CD8-positive, alpha-beta T cell (primary cell): ENCODE measurements at regions of chr13 and their contacts with region 1.

Region 1: GRCh38 chr13:77480066-77480465 is 55.4 kb upstream of the SCEL start:
- DNase-seq: no peak
- ATAC-seq: no peak
- H3K4me3 ChIP-seq: no peak overlapping the region
- H3K4me3 Mint-ChIP-seq: no peak overlapping the region
- H3K27ac ChIP-seq: no peak overlapping the region
- H3K27ac Mint-ChIP-seq: no peak overlapping the region
- H3K4me1 ChIP-seq: no peaks in the 10 kb centered on the region
- H3K4me1 Mint-ChIP-seq: peaks cover 10% of the 10 kb centered on the region
- H3K27me3 ChIP-seq: no peaks in the 10 kb centered on the region
- H3K27me3 Mint-ChIP-seq: no peaks in the 10 kb centered on the region
- CTCF ChIP-seq: no peak

Region 2: GRCh38 chr13:77176350-77176749 is 303.7 kb before region 1 on chr13:
- CTCF ChIA-PET with region 1: interaction called, 10 read pairs
- POLR2A ChIA-PET with region 1: no interaction called
- intact Hi-C with region 1: loop called in 1 of 2 experiments (anchors 5 kb)
- DNase-seq: no peak
- ATAC-seq: no peak
- H3K4me3 ChIP-seq: no peak overlapping the region
- H3K4me3 Mint-ChIP-seq: no peak overlapping the region
- H3K27ac ChIP-seq: no peak overlapping the region
- H3K27ac Mint-ChIP-seq: no peak overlapping the region
- H3K4me1 ChIP-seq: no peaks in the 10 kb centered on the region
- H3K4me1 Mint-ChIP-seq: peaks cover 2% of the 10 kb centered on the region
- H3K27me3 ChIP-seq: no peaks in the 10 kb centered on the region
- H3K27me3 Mint-ChIP-seq: no peaks in the 10 kb centered on the region
- CTCF ChIP-seq: no peak

Region 3: GRCh38 chr13:77265336-77265735 is 214.7 kb before region 1 on chr13:
- CTCF ChIA-PET with region 1: interaction called, 17 read pairs
- POLR2A ChIA-PET with region 1: no interaction called
- intact Hi-C with region 1: no loop called
- DNase-seq: no peak
- ATAC-seq: no peak
- H3K4me3 ChIP-seq: no peak overlapping the region
- H3K4me3 Mint-ChIP-seq: no peak overlapping the region
- H3K27ac ChIP-seq: no peak overlapping the region
- H3K27ac Mint-ChIP-seq: no peak overlapping the region
- H3K4me1 ChIP-seq: no peaks in the 10 kb centered on the region
- H3K4me1 Mint-ChIP-seq: no peaks in the 10 kb centered on the region
- H3K27me3 ChIP-seq: no peaks in the 10 kb centered on the region
- H3K27me3 Mint-ChIP-seq: no peaks in the 10 kb centered on the region
- CTCF ChIP-seq: no peak

Region 4: GRCh38 chr13:77337162-77337561 is 142.9 kb before region 1 on chr13:
- CTCF ChIA-PET with region 1: interaction called, 8 read pairs
- POLR2A ChIA-PET with region 1: no interaction called
- intact Hi-C with region 1: loop called in 1 of 2 experiments (anchors 2 kb)
- DNase-seq: no peak
- ATAC-seq: no peak
- H3K4me3 ChIP-seq: no peak overlapping the region
- H3K4me3 Mint-ChIP-seq: no peak overlapping the region
- H3K27ac ChIP-seq: no peak overlapping the region
- H3K27ac Mint-ChIP-seq: no peak overlapping the region
- H3K4me1 ChIP-seq: no peaks in the 10 kb centered on the region
- H3K4me1 Mint-ChIP-seq: peaks cover 12% of the 10 kb centered on the region
- H3K27me3 ChIP-seq: no peaks in the 10 kb centered on the region
- H3K27me3 Mint-ChIP-seq: no peaks in the 10 kb centered on the region
- CTCF ChIP-seq: no peak